Activated naive CD4-positive, alpha-beta T cell treated with anti-CD3 and anti-CD28 coated beads for 36 hours (primary cell): ENCODE measurements at regions of chr6 and their contacts with region 1.

Region 1: GRCh38 chr6:113909234-113909856 is 52.2 kb downstream of the MARCKS start:
- DNase-seq: no peak
- H3K4me3 Mint-ChIP-seq: no peak overlapping the region
- H3K27ac Mint-ChIP-seq: no peak overlapping the region
- H3K4me1 Mint-ChIP-seq: no peaks in the 10 kb centered on the region
- H3K27me3 Mint-ChIP-seq: peaks cover 3% of the 10 kb centered on the region

Region 2: DNA sequence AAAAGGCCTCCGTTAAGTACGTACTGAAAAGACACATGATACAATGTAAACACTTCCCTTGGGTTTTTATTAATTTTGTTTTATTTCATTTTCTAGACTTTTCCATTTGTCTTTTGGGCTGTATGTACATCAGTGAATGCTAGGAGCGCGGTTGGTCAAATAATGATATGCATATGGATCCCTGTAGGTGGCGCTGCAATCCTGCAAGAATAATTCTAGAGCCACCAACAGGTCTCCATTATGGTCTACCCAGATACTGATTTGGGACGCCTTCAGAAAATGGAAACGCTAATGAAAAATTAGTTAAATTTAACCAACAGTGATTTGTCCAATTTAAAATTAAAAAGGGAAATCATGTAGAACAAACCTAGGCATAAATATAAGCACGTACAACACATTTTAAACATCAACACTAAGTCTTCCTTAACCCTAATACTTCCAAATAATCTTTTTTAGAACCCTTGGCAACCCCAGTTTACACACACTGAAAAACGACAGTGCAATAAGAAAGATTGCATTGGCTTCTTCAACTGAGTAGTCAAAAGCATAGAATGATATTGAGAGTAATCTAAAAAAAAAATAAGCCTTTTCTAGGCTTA is 1128.7 kb before region 1 on chr6:
- CTCF ChIA-PET with region 1: no interaction called
- intact Hi-C with region 1: loop called (anchors 2 kb)
- DNase-seq: peak; percentile 47
- H3K4me3 Mint-ChIP-seq: no peak overlapping the region
- H3K27ac Mint-ChIP-seq: no peak overlapping the region
- H3K4me1 Mint-ChIP-seq: no peaks in the 10 kb centered on the region
- H3K27me3 Mint-ChIP-seq: no peaks in the 10 kb centered on the region

Region 3: DNA sequence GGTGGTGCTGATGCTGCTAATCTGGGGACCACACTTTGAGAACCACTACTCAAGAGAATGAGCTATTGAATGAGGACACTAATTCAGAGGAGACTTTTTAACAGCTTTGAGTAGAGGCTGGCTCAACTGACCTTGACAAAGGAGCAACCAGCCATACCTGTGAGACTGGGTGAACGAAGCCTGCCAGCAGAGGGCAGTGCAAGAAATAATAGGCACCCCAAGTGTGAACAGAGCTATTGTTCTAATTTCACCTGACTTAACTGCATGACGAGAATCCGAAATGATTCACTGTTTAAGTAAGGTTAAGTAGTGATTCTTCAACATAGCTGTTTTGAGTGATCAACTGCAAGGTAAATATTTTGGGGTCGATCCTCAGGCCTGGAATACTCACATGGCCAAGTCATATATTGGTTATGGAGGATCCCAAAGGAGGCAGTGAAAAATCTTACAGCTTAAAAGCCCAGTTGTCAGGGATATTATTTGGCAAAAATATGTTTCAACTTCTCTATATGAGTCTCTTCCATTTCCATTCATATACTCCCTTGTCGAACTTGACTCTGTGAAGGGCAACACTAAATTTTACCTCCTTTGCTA is 602.7 kb before region 1 on chr6:
- CTCF ChIA-PET with region 1: no interaction called
- intact Hi-C with region 1: loop called (anchors 1 kb)
- DNase-seq: peak; percentile 65
- H3K4me3 Mint-ChIP-seq: no peak overlapping the region
- H3K27ac Mint-ChIP-seq: no peak overlapping the region
- H3K4me1 Mint-ChIP-seq: no peaks in the 10 kb centered on the region
- H3K27me3 Mint-ChIP-seq: no peaks in the 10 kb centered on the region

Region 4: DNA sequence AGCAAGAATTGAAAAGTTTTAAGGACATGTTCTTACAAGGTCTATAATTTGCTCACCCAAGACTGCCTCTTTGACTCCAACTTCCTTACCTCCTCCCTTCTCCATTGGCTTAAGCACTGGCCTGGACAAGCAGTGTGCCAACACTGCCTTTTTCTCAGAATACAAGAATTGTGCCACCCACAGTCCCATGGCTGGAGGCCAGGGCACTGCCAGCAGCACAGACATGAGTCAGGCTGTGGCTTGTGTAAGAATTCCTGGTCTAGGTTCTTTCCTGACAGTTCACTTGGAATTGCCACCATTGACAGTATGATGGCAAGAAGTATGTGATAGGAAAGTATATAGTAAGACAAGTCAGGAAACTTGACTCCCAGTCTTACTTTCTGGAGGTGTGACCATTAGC is 254.9 kb before region 1 on chr6:
- CTCF ChIA-PET with region 1: no interaction called
- intact Hi-C with region 1: no loop called
- DNase-seq: no peak
- H3K4me3 Mint-ChIP-seq: no peak overlapping the region
- H3K27ac Mint-ChIP-seq: no peak overlapping the region
- H3K4me1 Mint-ChIP-seq: no peaks in the 10 kb centered on the region
- H3K27me3 Mint-ChIP-seq: peaks cover 3% of the 10 kb centered on the region

Region 5: GRCh38 chr6:113930183-113930582 is 20.8 kb after region 1 on chr6:
- CTCF ChIA-PET with region 1: no interaction called
- intact Hi-C with region 1: no loop called
- DNase-seq: no peak
- H3K4me3 Mint-ChIP-seq: no peak overlapping the region
- H3K27ac Mint-ChIP-seq: no peak overlapping the region
- H3K4me1 Mint-ChIP-seq: no peaks in the 10 kb centered on the region
- H3K27me3 Mint-ChIP-seq: peaks cover 7% of the 10 kb centered on the region